ENCODE measurements at regions of chr22 and their contacts with region 1.

Region 1: DNA sequence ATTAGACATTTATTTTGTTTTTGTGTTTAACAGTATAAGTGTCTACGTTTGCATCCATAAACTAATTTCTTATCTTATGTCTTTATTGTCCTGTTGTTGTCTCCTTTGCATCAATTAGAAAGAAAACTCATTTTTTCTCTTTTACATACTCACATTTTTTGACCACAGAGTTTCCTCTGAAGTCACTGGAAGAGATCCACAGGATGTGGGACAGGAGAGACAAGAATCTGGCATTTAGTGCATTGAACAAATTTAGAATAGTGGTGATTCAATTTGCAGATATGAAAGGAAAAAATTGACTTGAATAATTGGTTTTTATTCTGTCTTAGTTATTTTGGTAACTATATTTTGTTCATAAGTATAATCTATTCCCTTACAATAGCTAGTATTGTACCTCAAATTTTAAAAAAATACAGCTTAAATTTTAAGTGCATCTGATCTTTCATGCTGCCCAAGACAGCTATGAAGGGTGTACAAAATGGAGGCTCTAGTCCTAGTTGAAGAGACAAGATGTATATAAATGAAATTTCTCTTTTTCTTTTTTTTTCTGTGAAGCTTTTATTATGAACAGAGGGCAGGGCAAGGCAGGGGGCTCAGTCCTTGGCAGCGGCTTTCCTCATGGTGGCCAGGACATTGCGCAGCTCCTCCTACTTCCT is 24.4 kb downstream of the HORMAD2 start:
- DNase-seq: peak; percentile 23
- H3K4me3 Mint-ChIP-seq: peak overlapping the region; percentile 37
- H3K27ac Mint-ChIP-seq: peak overlapping the region; percentile 82
- H3K4me1 Mint-ChIP-seq: peaks cover 57% of the 10 kb centered on the region
- H3K27me3 Mint-ChIP-seq: no peaks in the 10 kb centered on the region

Region 2: GRCh38 chr22:29617922-29618629 is 486.6 kb before region 1 on chr22:
- intact Hi-C with region 1: no loop called
- DNase-seq: no peak
- H3K4me3 Mint-ChIP-seq: no peak overlapping the region
- H3K27ac Mint-ChIP-seq: peak overlapping the region; percentile 63
- H3K4me1 Mint-ChIP-seq: peaks cover 30% of the 10 kb centered on the region
- H3K27me3 Mint-ChIP-seq: no peaks in the 10 kb centered on the region

Region 3: DNA sequence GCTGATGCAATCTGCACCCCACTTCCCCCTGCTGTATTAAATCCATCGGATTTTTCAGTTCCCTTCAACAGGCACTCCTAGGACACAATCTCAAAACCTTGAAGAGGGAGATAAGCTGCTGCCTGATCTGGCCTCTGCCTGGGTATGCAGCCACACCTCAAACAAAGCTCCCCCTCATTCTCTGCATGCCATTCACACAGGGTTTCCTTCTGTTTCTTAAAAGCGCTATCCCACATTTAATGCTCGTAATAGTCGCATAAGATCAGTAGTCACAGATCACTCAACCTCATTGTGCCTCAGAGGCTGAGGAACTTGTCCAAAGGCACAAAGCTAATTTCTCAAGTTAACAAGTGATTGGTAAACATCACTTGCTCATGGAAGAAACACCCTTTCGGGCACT is 303.5 kb before region 1 on chr22:
- intact Hi-C with region 1: no loop called
- DNase-seq: no peak
- H3K4me3 Mint-ChIP-seq: no peak overlapping the region
- H3K27ac Mint-ChIP-seq: no peak overlapping the region
- H3K4me1 Mint-ChIP-seq: peaks cover 11% of the 10 kb centered on the region
- H3K27me3 Mint-ChIP-seq: no peaks in the 10 kb centered on the region

Region 4: DNA sequence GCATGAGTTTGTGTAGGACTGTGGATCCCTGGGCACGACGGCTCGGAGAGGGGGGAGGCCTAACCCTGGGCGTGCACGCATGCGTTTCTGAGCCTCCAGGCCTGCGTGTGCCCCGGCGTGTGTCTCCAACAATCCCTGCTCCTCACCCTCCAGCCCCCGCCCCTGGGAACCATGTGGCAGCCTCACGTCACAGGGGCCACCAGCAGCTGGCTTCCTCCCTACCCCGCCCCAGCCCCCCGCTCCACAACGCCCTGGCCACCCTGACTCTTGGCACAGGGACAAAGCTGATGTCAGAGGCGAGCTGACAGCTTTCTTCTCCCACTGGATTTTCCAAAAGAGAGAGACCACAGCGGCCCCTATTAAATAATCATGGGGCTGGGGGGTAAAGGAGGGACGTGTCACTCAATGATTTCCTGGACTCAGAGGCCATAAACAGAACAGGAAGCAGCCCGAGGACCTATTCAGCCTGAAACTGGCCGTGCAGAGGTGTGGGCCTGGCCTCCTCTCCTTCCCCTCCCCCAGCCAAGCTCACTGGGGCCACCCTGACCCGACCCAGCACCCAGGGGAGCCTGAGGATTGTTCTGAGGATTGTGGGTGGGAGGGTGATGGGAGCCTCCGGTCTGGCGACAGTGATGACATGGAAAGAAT is 148.7 kb after region 1 on chr22:
- intact Hi-C with region 1: loop called (anchors 1 kb)
- DNase-seq: no peak
- H3K4me3 Mint-ChIP-seq: no peak overlapping the region
- H3K27ac Mint-ChIP-seq: peak overlapping the region; percentile 9
- H3K4me1 Mint-ChIP-seq: peaks cover 41% of the 10 kb centered on the region
- H3K27me3 Mint-ChIP-seq: no peaks in the 10 kb centered on the region